ENCODE measurements at regions of chr2 and their contacts with region 1.

Region 1: GRCh38 chr2:142112648-142113278 is 18.1 kb downstream of the LRP1B start:
- DNase-seq: peak; percentile 86
- ATAC-seq: peak; percentile 97
- H3K4me3 ChIP-seq: no peak overlapping the region
- H3K27ac ChIP-seq: peak overlapping the region; percentile 60
- H3K4me1 ChIP-seq: peaks cover 11% of the 10 kb centered on the region
- H3K27me3 ChIP-seq: no peaks in the 10 kb centered on the region
- CTCF ChIP-seq: peak; percentile 65

Region 2: DNA sequence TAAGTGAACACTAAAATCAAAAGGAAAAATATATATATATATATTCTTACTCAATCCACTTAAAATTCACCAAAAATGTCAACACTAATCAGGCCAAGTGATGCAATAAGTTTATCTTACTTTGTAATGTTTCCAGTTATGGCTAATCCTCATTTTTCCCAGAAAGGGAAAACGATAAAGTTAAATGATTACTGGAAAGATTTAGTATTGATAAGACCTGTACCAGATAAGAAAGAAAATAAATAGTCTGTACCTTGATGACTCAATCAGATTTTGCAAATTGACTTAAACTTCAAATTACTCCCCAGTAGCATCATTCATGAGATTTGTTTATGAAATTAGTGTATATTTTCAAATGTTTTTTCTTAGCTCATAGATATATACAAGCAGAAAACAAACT is 388.9 kb before region 1 on chr2:
- CTCF ChIA-PET with region 1: interaction called, 3 read pairs
- POLR2A ChIA-PET with region 1: no interaction called
- intact Hi-C with region 1: loop called (anchors 5 kb)
- DNase-seq: no peak
- ATAC-seq: no peak
- H3K4me3 ChIP-seq: no peak overlapping the region
- H3K27ac ChIP-seq: no peak overlapping the region
- H3K4me1 ChIP-seq: no peaks in the 10 kb centered on the region
- H3K27me3 ChIP-seq: no peaks in the 10 kb centered on the region
- CTCF ChIP-seq: no peak

Region 3: GRCh38 chr2:141994066-141994465 is 118.7 kb before region 1 on chr2:
- CTCF ChIA-PET with region 1: no interaction called
- POLR2A ChIA-PET with region 1: no interaction called
- intact Hi-C with region 1: loop called (anchors 5 kb)
- DNase-seq: peak; percentile 43
- ATAC-seq: peak; percentile 92
- H3K4me3 ChIP-seq: no peak overlapping the region
- H3K27ac ChIP-seq: no peak overlapping the region
- H3K4me1 ChIP-seq: 0 out of 2 replicates have a peak, but pooled peaks cover 4% of the 10 kb centered on the region
- H3K27me3 ChIP-seq: no peaks in the 10 kb centered on the region
- CTCF ChIP-seq: no peak

Region 4: DNA sequence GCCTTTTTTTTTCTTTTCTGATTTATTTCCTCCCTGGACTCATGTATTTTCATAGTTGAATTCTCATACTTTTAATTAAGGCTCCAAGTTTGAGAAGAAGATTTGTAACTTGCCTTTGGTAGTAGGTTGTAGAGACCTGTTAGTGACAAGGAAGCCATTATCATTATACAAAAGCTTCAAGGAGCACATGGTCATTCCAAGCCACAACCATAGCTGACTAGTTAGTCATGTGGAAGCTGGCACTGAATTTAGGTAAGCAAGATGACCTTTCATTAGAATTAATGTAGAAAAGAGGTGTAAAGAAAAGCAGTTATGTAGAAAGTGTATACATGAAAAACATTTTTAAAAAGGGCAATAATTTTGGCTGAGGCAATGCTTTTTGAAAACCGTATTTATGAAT is 71.7 kb before region 1 on chr2:
- CTCF ChIA-PET with region 1: interaction called, 3 read pairs
- POLR2A ChIA-PET with region 1: no interaction called
- intact Hi-C with region 1: loop called (anchors 2 kb)
- DNase-seq: peak; percentile 64
- ATAC-seq: peak; percentile 62
- H3K4me3 ChIP-seq: no peak overlapping the region
- H3K27ac ChIP-seq: peak overlapping the region; percentile 61
- H3K4me1 ChIP-seq: peaks cover 24% of the 10 kb centered on the region
- H3K27me3 ChIP-seq: no peaks in the 10 kb centered on the region
- CTCF ChIP-seq: no peak

Region 5: DNA sequence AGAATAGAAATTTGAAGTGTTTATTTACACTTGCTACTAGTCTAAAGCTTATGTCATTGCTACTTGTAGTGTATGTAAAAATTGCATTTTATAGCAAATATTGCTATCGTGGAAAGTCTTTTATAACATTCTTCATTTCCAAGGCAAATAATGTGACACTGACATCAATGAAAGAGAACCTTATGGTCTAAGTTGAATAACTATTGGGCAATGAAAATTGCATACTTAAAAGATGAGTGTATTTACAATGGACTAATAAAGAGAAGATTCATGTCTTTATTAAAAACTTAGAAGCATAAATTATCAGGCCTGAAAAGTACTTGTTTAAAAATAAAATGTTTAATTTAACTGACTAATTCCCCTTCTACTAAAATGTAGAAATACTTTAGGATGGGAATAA is 64.2 kb before region 1 on chr2:
- CTCF ChIA-PET with region 1: no interaction called
- POLR2A ChIA-PET with region 1: no interaction called
- intact Hi-C with region 1: loop called (anchors 1 kb)
- DNase-seq: peak; percentile 69
- ATAC-seq: peak; percentile 84
- H3K4me3 ChIP-seq: no peak overlapping the region
- H3K27ac ChIP-seq: 0 out of 2 replicates have a peak overlapping the region, but pooled peaks have one; percentile 11
- H3K4me1 ChIP-seq: peaks cover 22% of the 10 kb centered on the region; the same call in 1 of the 2 replicates
- H3K27me3 ChIP-seq: no peaks in the 10 kb centered on the region
- CTCF ChIP-seq: no peak

Region 6: GRCh38 chr2:142100967-142101366 is 11.8 kb before region 1 on chr2:
- CTCF ChIA-PET with region 1: interaction called, 3 read pairs
- POLR2A ChIA-PET with region 1: no interaction called
- intact Hi-C with region 1: loop called (anchors 1 kb)
- DNase-seq: peak; percentile 28
- ATAC-seq: peak; percentile 70
- H3K4me3 ChIP-seq: no peak overlapping the region
- H3K27ac ChIP-seq: no peak overlapping the region
- H3K4me1 ChIP-seq: no peaks in the 10 kb centered on the region
- H3K27me3 ChIP-seq: no peaks in the 10 kb centered on the region
- CTCF ChIP-seq: no peak